Activated CD4-positive, alpha-beta T cell treated with anti-CD3 and anti-CD28 coated beads, Interleukin-2, amount 10 ng/mL, durations not matched to agents 24 days and 14 days (primary cell): ENCODE measurements at regions of chr14 and their contacts with region 1.

Region 1: GRCh38 chr14:31388687-31389413 is 31.5 kb downstream of the HEATR5A start:
- DNase-seq: no peak
- H3K4me3 Mint-ChIP-seq: peak overlapping the region; percentile 42
- H3K27ac Mint-ChIP-seq: peak overlapping the region; percentile 83
- H3K4me1 Mint-ChIP-seq: peaks cover 23% of the 10 kb centered on the region
- H3K27me3 Mint-ChIP-seq: no peaks in the 10 kb centered on the region

Region 2: GRCh38 chr14:31127690-31128089 is 261.2 kb before region 1 on chr14:
- intact Hi-C with region 1: loop called (anchors 5 kb)
- DNase-seq: peak; percentile 88
- H3K4me3 Mint-ChIP-seq: peak overlapping the region; percentile 14
- H3K27ac Mint-ChIP-seq: peak overlapping the region; percentile 59
- H3K4me1 Mint-ChIP-seq: peaks cover 31% of the 10 kb centered on the region
- H3K27me3 Mint-ChIP-seq: no peaks in the 10 kb centered on the region

Region 3: DNA sequence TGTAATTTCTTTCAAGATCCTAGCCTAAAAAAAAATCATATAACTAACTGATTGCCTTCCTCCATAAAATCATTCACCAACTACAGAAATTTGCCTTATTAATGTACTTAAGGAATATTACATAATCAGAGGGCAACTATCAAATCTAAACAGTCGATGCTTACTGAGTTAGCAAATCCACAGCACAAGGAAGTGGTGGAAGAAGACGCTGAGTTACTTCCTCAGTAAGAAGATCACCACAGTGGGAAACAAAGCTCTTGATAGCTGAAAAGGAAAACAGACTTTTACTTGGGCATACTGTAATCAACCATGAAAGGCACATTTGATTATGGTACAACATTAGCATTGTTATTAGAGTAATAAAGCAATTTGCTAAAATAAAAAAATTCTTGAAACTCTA is 17.2 kb before region 1 on chr14:
- intact Hi-C with region 1: loop called (anchors 2 kb)
- DNase-seq: no peak
- H3K4me3 Mint-ChIP-seq: no peak overlapping the region
- H3K27ac Mint-ChIP-seq: no peak overlapping the region
- H3K4me1 Mint-ChIP-seq: peaks cover 9% of the 10 kb centered on the region
- H3K27me3 Mint-ChIP-seq: no peaks in the 10 kb centered on the region

Region 4: GRCh38 chr14:31400031-31400638 is 11.3 kb after region 1 on chr14:
- intact Hi-C with region 1: loop called (anchors 1 kb)
- DNase-seq: no peak
- H3K4me3 Mint-ChIP-seq: peak overlapping the region; percentile 28
- H3K27ac Mint-ChIP-seq: peak overlapping the region; percentile 80
- H3K4me1 Mint-ChIP-seq: peaks cover 19% of the 10 kb centered on the region
- H3K27me3 Mint-ChIP-seq: no peaks in the 10 kb centered on the region

Region 5: DNA sequence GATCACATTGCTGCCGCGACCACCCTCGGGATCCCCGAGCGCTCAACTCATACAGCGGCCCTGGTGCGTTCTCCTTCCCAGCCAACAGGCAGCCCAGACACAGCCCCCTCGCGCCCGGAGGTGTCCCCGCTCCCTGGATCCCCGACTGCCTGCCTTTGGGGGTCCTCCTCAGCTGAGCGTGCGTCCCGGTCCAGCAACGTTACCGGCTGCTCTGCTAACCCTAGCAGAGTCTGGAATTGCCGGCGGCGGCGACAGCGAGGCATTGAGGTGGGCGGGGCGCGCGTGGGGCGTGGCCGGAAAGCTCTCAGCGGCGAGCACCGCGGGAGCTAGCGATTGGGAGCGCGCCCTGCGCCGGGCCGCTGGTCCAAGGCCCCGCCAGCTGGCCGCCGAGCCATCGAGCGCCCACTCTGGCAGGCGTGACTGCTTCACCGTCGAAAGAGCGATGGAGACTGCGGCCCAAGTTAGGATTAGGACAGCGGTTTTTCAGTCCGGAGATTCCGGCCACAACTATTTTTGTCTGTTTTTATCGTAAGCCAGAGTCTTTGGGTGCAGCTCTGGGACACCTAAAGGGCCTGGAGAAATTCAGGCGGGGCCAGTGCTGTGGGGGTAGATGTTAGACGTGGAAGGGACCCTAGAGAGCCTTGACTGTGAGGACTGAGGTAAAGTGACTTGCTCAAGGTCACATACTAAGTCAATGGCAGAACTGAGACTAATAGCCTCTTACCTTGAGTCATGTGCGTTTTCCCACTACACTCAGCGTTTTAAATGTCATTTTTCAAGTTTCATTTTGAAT is 31.7 kb after region 1 on chr14 and contains the start of gene HEATR5A:
- intact Hi-C with region 1: loop called (anchors 1 kb)
- DNase-seq: peak; percentile 98
- H3K4me3 Mint-ChIP-seq: peak within 1 kb of the TSS; percentile 94
- H3K27ac Mint-ChIP-seq: peak within 1 kb of the TSS; percentile 95
- H3K4me1 Mint-ChIP-seq: peaks cover 24% of the 10 kb centered on the region
- H3K27me3 Mint-ChIP-seq: peaks cover 2% of the 10 kb centered on the region
- total RNA-seq, gene HEATR5A: 23.6 and 24.2 TPM in 2 replicates

Region 6: DNA sequence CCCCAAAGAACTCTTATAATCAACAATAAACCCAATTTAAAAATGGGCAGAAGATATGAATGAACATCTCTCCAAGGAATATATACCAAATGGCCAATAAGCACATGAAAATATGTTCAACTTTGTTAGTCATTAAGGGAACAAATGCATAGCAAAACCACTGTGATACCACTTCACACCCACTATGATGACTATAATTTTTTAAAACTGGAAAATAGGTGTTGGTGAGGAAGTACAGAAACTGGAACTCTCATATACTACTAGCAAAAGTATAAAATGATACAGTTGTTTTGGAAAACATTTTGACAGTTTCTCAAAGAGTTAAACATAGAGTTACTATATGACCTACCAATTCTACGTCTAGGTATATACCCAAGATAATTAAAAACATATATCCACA is 40.9 kb after region 1 on chr14:
- intact Hi-C with region 1: loop called (anchors 1 kb)
- DNase-seq: no peak
- H3K4me3 Mint-ChIP-seq: no peak overlapping the region
- H3K27ac Mint-ChIP-seq: peak overlapping the region; percentile 69
- H3K4me1 Mint-ChIP-seq: peaks cover 8% of the 10 kb centered on the region
- H3K27me3 Mint-ChIP-seq: no peaks in the 10 kb centered on the region

Region 7: GRCh38 chr14:31456841-31457664 is 68.2 kb after region 1 on chr14 and contains the start of gene DTD2:
- intact Hi-C with region 1: loop called (anchors 2 kb)
- DNase-seq: peak; percentile 97
- H3K4me3 Mint-ChIP-seq: peak within 1 kb of the TSS; percentile 95
- H3K27ac Mint-ChIP-seq: peak within 1 kb of the TSS; percentile 98
- H3K4me1 Mint-ChIP-seq: peaks cover 24% of the 10 kb centered on the region
- H3K27me3 Mint-ChIP-seq: peaks cover 4% of the 10 kb centered on the region
- total RNA-seq, gene DTD2: 30.8 and 32.2 TPM in 2 replicates

Region 8: DNA sequence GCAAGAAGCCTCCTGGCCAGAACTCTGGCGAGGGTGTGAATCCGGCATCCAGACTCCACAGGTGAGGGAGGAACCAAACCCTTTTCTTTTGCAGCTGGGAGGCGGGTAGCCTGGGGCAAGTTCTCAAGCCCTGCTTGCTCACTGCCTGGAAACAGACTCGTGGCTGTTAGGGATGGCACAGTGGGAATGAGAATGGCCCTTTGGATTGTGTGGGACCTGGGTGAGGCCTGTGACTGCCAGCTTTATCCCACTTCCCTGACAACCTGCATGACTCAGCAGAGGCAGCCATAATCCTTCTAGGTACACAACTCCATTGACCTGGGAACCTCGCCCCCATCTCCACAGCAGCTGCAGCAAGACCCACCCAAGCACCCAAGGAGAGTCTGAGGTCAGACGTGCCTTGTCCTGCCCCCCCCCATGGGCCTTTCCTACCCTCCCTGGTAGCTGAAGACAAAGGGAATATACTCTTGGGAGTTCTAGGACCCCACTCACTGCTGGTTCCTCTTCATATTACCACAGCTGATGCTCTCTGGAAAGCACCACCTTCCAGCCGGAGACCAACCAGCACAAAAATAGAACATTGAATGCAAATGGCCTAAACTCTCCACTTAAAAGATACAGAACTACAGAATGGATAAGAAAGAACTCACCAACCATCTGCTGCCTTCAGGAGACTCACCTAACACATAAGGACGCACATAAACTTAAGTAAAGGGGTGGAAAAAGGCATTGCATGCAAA is 104.1 kb after region 1 on chr14:
- intact Hi-C with region 1: no loop called
- DNase-seq: no peak
- H3K4me3 Mint-ChIP-seq: no peak overlapping the region
- H3K27ac Mint-ChIP-seq: no peak overlapping the region
- H3K4me1 Mint-ChIP-seq: no peaks in the 10 kb centered on the region
- H3K27me3 Mint-ChIP-seq: peaks cover 8% of the 10 kb centered on the region